T-cell (primary cell): ENCODE measurements at regions of chr14 and their contacts with region 1.

Region 1: GRCh38 chr14:99971087-99971940 is 93.9 kb upstream of the EVL start:
- DNase-seq: peak; percentile 49 to 87 (median 72)
- ATAC-seq: peak; percentile 80 to 88 (median 86)
- H3K4me3 ChIP-seq: peak overlapping the region; percentile 25 to 36
- H3K4me3 Mint-ChIP-seq: peak overlapping the region; percentile 73 to 94 (median 76)
- H3K27ac ChIP-seq: no peak overlapping the region
- H3K27ac Mint-ChIP-seq: peak overlapping the region in 1 of 2 donors; percentile 22
- H3K4me1 ChIP-seq: peaks cover 0 to 12% of the 10 kb centered on the region in 2 experiments
- H3K4me1 Mint-ChIP-seq: peaks cover 10 to 20% (median 14%) of the 10 kb centered on the region in 3 donors
- H3K27me3 ChIP-seq: peaks cover 0 to 31% of the 10 kb centered on the region in 2 experiments
- H3K27me3 Mint-ChIP-seq: peaks cover 14 to 16% of the 10 kb centered on the region in 2 donors

Region 2: GRCh38 chr14:100056964-100057795 is 85.9 kb after region 1 on chr14:
- CTCF ChIA-PET with region 1: interaction called in 1 of 2 experiments, 10 read pairs
- POLR2A ChIA-PET with region 1: interaction called in 1 of 2 experiments, 4 read pairs
- DNase-seq: peak in 6 of 35 experiments; percentile 28 to 80 (median 42)
- ATAC-seq: peak; percentile 75 to 83 (median 80)
- H3K4me3 ChIP-seq: no peak overlapping the region
- H3K4me3 Mint-ChIP-seq: peak overlapping the region in 2 of 3 donors; percentile 41 to 49
- H3K27ac ChIP-seq: no peak overlapping the region
- H3K27ac Mint-ChIP-seq: peak overlapping the region; percentile 90 to 93
- H3K4me1 ChIP-seq: peaks cover 37 to 52% of the 10 kb centered on the region in 2 experiments
- H3K4me1 Mint-ChIP-seq: peaks cover 54 to 67% (median 56%) of the 10 kb centered on the region in 3 donors
- H3K27me3 ChIP-seq: no peaks in the 10 kb centered on the region
- H3K27me3 Mint-ChIP-seq: no peaks in the 10 kb centered on the region

Region 3: DNA sequence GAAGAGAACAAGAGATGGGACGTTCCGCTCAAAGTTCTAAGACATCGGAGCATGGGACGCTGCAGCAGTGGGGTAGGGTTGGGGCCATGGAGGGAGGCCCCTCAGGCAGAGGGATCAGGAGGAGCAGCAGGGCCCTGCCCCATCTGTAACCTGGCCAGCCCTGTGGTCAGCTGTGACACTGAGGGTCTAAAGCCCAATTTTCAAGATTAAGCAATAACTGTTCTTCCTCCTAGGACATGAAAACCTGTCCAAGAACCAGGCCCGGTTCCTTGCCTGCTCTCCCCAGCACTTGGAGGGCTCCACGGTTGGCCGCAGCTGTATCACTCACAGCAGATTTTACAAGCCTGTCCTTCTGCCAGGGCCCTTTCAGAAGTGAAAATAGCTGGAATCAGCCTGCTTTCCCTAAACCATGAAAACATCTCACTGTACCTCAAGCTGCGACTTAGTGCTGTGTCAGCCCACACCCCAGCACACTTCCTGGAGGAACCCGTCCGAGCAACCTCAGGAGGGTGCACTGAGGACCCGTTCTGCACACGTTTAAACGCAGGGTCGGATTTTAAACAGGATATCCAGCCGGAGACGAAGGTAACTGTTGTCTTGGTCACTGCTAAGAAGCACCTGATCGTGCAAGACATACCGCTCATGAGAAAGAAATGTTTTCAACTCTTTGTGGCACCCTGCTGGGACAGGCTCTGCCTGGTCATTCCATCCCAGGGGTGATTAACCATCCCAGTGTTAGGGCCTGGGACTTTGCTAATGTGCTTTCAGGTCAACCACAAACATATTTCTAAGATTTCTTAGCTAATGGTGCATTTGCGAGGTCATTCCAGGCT is 1388.1 kb after region 1 on chr14:
- CTCF ChIA-PET with region 1: no interaction called
- POLR2A ChIA-PET with region 1: interaction called in 1 of 2 experiments, 11 read pairs
- DNase-seq: no peak
- ATAC-seq: no peak
- H3K4me3 ChIP-seq: no peak overlapping the region
- H3K4me3 Mint-ChIP-seq: no peak overlapping the region
- H3K27ac ChIP-seq: no peak overlapping the region
- H3K27ac Mint-ChIP-seq: no peak overlapping the region
- H3K4me1 ChIP-seq: no peaks in the 10 kb centered on the region
- H3K4me1 Mint-ChIP-seq: peaks cover 0 to 3% (median 0%) of the 10 kb centered on the region in 3 donors
- H3K27me3 ChIP-seq: peaks cover 0 to 61% of the 10 kb centered on the region in 2 experiments
- H3K27me3 Mint-ChIP-seq: peaks cover 44 to 49% of the 10 kb centered on the region in 2 donors